GM12878 (cell line): ENCODE measurements at regions of chr1 and their contacts with region 1.

Region 1: DNA sequence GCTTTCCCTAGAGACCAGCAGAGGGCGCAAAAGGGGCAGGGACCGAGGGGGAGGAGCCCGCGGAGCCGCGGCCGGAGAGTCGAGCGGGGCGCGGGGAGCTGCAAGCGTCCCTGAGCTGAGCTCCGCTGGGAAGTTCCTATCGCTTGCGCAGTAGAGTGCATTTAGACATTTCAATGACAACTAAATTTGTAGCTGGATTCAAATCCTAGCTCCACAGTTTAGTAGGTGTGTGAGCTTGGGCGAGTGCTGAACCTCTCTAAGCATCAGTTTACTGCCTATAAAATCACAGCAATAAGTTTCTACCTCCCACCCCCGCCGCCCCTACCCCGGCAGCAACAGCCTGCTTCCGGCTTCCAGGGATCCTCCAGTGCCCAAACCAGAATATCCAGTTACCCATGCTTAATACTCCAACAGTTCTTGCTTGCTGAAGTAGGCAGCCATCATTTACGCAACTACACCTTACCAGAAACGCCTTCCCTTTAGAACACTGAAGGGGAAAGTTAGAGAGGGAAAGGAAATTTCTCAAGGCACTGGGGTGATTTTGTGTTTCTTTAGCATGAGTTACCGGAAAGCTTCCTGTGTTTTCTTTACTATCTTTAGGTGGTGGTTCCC is 9.1 kb downstream of the TLR5 start:
- DNase-seq: peak; percentile 15
- ATAC-seq: peak; percentile 84
- H3K4me3 ChIP-seq: no peak overlapping the region
- H3K27ac ChIP-seq: no peak overlapping the region
- H3K4me1 ChIP-seq: no peaks in the 10 kb centered on the region
- H3K27me3 ChIP-seq: peaks cover 0 to 12% of the 10 kb centered on the region in 2 experiments; a peak in 2 of 4 replicates
- CTCF ChIP-seq: peak; percentile 88 to 95 (median 93)
- EP300 ChIP-seq: no peak
- POLR2A ChIP-seq: no peak
- RAD21 ChIP-seq: peak; percentile 78

Region 2: GRCh38 chr1:223153177-223154119 is 19.5 kb after region 1 on chr1:
- CTCF ChIA-PET with region 1: interaction called, 19 read pairs
- POLR2A ChIA-PET with region 1: no interaction called
- RAD21 ChIA-PET with region 1: interaction called, 7 read pairs
- SMC1A ChIA-PET with region 1: interaction called, 10 read pairs
- in situ Hi-C with region 1: no loop called
- intact Hi-C with region 1: no loop called
- DNase-seq: no peak
- ATAC-seq: peak; percentile 28; the same call in 2 of the 3 replicates
- H3K4me3 ChIP-seq: no peak overlapping the region
- H3K27ac ChIP-seq: no peak overlapping the region
- H3K4me1 ChIP-seq: no peaks in the 10 kb centered on the region
- H3K27me3 ChIP-seq: no peaks in the 10 kb centered on the region
- CTCF ChIP-seq: no peak
- EP300 ChIP-seq: no peak
- POLR2A ChIP-seq: no peak
- RAD21 ChIP-seq: no peak

Region 3: GRCh38 chr1:223180731-223181321 is 46.9 kb after region 1 on chr1:
- CTCF ChIA-PET with region 1: interaction called, 30 read pairs
- POLR2A ChIA-PET with region 1: interaction called, 4 read pairs
- RAD21 ChIA-PET with region 1: interaction called, 31 read pairs
- SMC1A ChIA-PET with region 1: interaction called, 47 read pairs
- in situ Hi-C with region 1: no loop called
- intact Hi-C with region 1: no loop called
- DNase-seq: peak; percentile 12
- ATAC-seq: peak; percentile 95
- H3K4me3 ChIP-seq: no peak overlapping the region
- H3K27ac ChIP-seq: no peak overlapping the region
- H3K4me1 ChIP-seq: no peaks in the 10 kb centered on the region
- H3K27me3 ChIP-seq: peaks cover 0 to 3% of the 10 kb centered on the region in 2 experiments; a peak in 2 of 4 replicates
- CTCF ChIP-seq: no peak
- EP300 ChIP-seq: peak in 1 of 2 experiments; percentile 68; a peak in 2 of 4 replicates
- POLR2A ChIP-seq: no peak
- RAD21 ChIP-seq: no peak

Region 4: GRCh38 chr1:223244366-223245103 is 110.6 kb after region 1 on chr1:
- CTCF ChIA-PET with region 1: interaction called, 406 read pairs
- POLR2A ChIA-PET with region 1: interaction called, 9 read pairs
- RAD21 ChIA-PET with region 1: interaction called, 83 read pairs
- SMC1A ChIA-PET with region 1: interaction called, 218 read pairs
- in situ Hi-C with region 1: no loop called
- intact Hi-C with region 1: loop called (anchors 1 kb)
- DNase-seq: peak; percentile 30
- ATAC-seq: peak; percentile 93
- H3K4me3 ChIP-seq: no peak overlapping the region
- H3K27ac ChIP-seq: no peak overlapping the region
- H3K4me1 ChIP-seq: no peaks in the 10 kb centered on the region
- H3K27me3 ChIP-seq: no peaks in the 10 kb centered on the region; a peak in 1 of 4 replicates
- CTCF ChIP-seq: peak; percentile 46 to 84 (median 59); a peak in 5 of 6 replicates
- EP300 ChIP-seq: peak; percentile 22 to 58; a peak in 2 of 4 replicates
- POLR2A ChIP-seq: no peak
- RAD21 ChIP-seq: peak; percentile 66

Region 5: GRCh38 chr1:223683586-223684487 is 549.9 kb after region 1 on chr1:
- CTCF ChIA-PET with region 1: interaction called, 24 read pairs
- POLR2A ChIA-PET with region 1: no interaction called
- RAD21 ChIA-PET with region 1: interaction called, 10 read pairs
- SMC1A ChIA-PET with region 1: interaction called, 4 read pairs
- in situ Hi-C with region 1: loop called (anchors 5 kb)
- intact Hi-C with region 1: loop called (anchors 1 kb)
- DNase-seq: no peak
- ATAC-seq: peak; percentile 81
- H3K4me3 ChIP-seq: no peak overlapping the region
- H3K27ac ChIP-seq: no peak overlapping the region
- H3K4me1 ChIP-seq: no peaks in the 10 kb centered on the region
- H3K27me3 ChIP-seq: no peaks in the 10 kb centered on the region; a peak in 2 of 4 replicates
- CTCF ChIP-seq: peak; percentile 53 to 75 (median 67)
- EP300 ChIP-seq: no peak
- POLR2A ChIP-seq: no peak
- RAD21 ChIP-seq: peak; percentile 80